ENCODE measurements at regions of chr3 and their contacts with region 1.

Region 1: DNA sequence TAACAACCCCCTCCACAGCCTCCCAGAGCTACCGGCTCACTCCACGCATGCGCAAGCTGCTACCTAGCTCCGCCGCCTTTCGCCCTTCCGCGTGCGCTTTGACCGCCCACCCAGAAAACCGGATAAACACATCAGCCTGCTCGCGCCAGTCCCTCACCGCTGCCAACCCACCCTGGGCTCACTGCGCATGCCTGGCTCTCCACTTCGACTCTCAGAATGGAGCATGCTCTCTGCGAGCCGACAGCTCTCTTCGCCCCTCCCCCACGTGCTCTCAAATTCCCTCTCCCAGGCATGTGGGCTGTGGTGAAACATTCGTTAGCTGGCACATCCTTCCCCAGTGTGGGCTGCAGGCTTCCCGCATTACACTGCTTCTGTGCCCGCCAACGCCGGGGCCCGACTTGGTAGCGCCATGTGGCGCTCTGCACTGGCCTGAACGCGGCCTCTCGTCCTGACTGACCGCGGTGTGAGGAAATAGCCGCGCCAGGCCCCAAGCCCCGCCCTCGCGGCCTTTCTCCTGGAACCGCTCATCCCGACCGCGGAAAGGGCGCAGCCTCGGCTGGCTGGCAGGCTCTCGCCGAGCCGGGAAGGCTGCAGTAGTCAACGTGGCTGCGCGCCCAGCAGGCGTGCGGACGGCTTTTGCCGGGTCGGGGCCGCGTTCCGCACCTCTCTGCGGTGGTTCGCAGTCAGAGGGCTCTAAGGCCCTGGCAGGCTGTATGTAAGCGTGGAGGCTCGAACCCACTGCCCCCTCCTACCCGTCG is 445 bp upstream of the MSL2 start:
- DNase-seq: peak; percentile 100
- ATAC-seq: peak; percentile 79
- H3K4me3 Mint-ChIP-seq: peak overlapping the region; percentile 92
- H3K27ac Mint-ChIP-seq: peak overlapping the region; percentile 95
- H3K4me1 Mint-ChIP-seq: peaks cover 19% of the 10 kb centered on the region
- H3K27me3 Mint-ChIP-seq: no peaks in the 10 kb centered on the region

Region 2: GRCh38 chr3:136105044-136105443 is 91.5 kb before region 1 on chr3:
- CTCF ChIA-PET with region 1: no interaction called
- POLR2A ChIA-PET with region 1: no interaction called
- DNase-seq: peak; percentile 24
- ATAC-seq: no peak
- H3K4me3 Mint-ChIP-seq: no peak overlapping the region
- H3K27ac Mint-ChIP-seq: peak overlapping the region; percentile 50
- H3K4me1 Mint-ChIP-seq: peaks cover 22% of the 10 kb centered on the region
- H3K27me3 Mint-ChIP-seq: no peaks in the 10 kb centered on the region

Region 3: DNA sequence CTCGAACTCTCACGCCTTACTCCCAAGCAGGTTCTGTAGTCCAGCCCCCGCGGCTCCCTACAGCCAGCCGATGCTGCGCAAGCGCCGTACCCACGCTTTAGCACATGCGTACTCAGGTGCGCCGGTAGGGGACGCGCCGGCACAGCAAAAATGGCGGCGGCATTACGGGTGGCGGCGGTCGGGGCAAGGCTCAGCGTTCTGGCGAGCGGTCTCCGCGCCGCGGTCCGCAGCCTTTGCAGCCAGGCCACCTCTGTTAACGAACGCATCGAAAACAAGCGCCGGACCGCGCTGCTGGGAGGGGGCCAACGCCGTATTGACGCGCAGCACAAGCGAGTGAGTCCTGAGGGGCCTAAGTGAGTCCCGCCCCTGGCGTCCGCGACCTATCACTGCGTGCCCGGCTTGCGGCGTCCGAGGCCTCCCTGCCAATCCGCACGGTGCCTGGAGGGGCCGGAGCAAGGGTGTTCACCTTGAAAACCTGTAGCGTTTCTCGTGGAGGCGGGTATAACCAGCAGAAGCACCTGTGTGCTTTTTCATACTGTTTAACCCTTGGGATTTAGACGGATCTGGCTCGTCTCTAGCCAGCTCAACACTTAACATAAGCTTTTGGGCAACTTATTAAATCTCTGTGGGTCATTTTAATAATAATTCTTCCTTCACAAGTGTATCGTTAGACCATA is 53.8 kb after region 1 on chr3 and contains the start of gene PCCB:
- CTCF ChIA-PET with region 1: interaction called, 3 read pairs
- POLR2A ChIA-PET with region 1: interaction called, 11 read pairs
- DNase-seq: peak; percentile 95
- ATAC-seq: peak; percentile 100
- H3K4me3 Mint-ChIP-seq: peak within 1 kb of the TSS; percentile 91
- H3K27ac Mint-ChIP-seq: peak within 1 kb of the TSS; percentile 94
- H3K4me1 Mint-ChIP-seq: peaks cover 26% of the 10 kb centered on the region
- H3K27me3 Mint-ChIP-seq: no peaks in the 10 kb centered on the region
- total RNA-seq, gene PCCB: 22.5 to 23.7 TPM